ENCODE measurements at regions of chrX and their contacts with region 1.

Region 1: DNA sequence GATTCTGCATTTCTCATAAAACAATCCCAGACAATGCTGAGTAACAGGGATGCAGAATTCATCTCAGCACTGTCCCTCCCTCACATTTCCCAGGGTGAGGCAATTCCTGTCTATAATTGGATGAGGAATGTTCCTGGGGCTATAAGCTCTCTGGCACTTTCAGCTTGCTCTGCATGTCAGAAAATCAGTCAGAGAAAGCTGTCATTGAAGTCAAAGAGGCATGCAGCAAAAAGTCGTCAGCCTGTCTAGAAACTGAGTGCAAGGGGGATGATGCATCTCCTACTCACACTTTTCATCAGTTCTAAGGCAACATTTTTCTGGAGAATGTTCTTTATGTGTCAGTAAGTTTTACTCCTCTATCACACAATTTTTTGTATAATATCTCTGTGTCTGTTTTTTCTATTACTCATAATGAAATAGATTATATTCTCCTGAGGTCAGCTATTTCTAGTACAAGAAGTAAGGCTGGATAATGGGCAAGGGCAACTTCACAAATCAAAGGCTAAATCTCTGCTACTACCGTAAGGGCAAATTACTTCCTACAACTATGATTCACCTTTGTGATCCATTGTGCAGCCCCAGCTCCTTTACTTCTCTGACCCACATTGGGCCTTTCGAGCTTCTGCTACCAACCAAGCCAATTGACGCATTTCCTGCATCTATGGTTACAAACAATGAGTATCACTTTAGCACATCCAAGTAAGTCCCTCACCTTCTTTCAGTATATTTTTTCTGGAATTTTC is 56.0 kb downstream of the TASL start:
- DNase-seq: no peak
- ATAC-seq: no peak
- H3K4me3 ChIP-seq: no peak overlapping the region
- H3K4me3 Mint-ChIP-seq: no peak overlapping the region
- H3K27ac ChIP-seq: no peak overlapping the region
- H3K27ac Mint-ChIP-seq: no peak overlapping the region
- H3K4me1 ChIP-seq: no peaks in the 10 kb centered on the region
- H3K4me1 Mint-ChIP-seq: no peaks in the 10 kb centered on the region
- H3K27me3 ChIP-seq: no peaks in the 10 kb centered on the region
- H3K27me3 Mint-ChIP-seq: peaks cover 0 to 5% of the 10 kb centered on the region in 2 donors

Region 2: DNA sequence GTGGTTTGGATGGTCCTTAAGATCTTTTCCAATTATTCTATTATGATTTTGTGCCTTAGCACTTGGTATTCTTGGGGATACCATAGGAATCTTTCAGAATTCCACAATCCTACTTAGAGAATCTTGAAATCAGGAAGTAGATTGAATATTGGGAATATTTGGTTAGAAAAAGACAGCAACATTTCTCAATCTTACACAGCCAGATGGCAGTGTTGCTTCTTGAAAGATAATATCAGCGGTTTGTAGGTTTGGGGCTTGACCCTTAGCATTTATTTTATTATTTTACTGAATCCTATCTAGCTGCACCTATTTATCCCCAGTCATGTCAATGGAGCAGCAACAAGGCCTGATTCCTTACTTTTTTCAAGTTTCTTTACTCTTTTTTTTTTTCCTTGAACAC is 246.1 kb before region 1 on chrX:
- CTCF ChIA-PET with region 1: no interaction called
- POLR2A ChIA-PET with region 1: no interaction called
- DNase-seq: no peak
- ATAC-seq: no peak
- H3K4me3 ChIP-seq: no peak overlapping the region
- H3K4me3 Mint-ChIP-seq: no peak overlapping the region
- H3K27ac ChIP-seq: no peak overlapping the region
- H3K27ac Mint-ChIP-seq: no peak overlapping the region
- H3K4me1 ChIP-seq: peaks cover 0 to 9% of the 10 kb centered on the region in 2 experiments
- H3K4me1 Mint-ChIP-seq: peaks cover 5 to 8% (median 8%) of the 10 kb centered on the region in 3 donors
- H3K27me3 ChIP-seq: no peaks in the 10 kb centered on the region
- H3K27me3 Mint-ChIP-seq: peaks cover 0 to 15% of the 10 kb centered on the region in 2 donors

Region 3: GRCh38 chrX:30504309-30504708 is 17.3 kb before region 1 on chrX:
- CTCF ChIA-PET with region 1: interaction called in 1 of 2 experiments, 10 read pairs
- POLR2A ChIA-PET with region 1: no interaction called
- DNase-seq: peak in 1 of 35 experiments; percentile 27
- ATAC-seq: no peak
- H3K4me3 ChIP-seq: no peak overlapping the region
- H3K4me3 Mint-ChIP-seq: no peak overlapping the region
- H3K27ac ChIP-seq: no peak overlapping the region
- H3K27ac Mint-ChIP-seq: no peak overlapping the region
- H3K4me1 ChIP-seq: no peaks in the 10 kb centered on the region
- H3K4me1 Mint-ChIP-seq: no peaks in the 10 kb centered on the region
- H3K27me3 ChIP-seq: peaks cover 0 to 2% of the 10 kb centered on the region in 2 experiments
- H3K27me3 Mint-ChIP-seq: peaks cover 6 to 13% of the 10 kb centered on the region in 2 donors

Region 4: DNA sequence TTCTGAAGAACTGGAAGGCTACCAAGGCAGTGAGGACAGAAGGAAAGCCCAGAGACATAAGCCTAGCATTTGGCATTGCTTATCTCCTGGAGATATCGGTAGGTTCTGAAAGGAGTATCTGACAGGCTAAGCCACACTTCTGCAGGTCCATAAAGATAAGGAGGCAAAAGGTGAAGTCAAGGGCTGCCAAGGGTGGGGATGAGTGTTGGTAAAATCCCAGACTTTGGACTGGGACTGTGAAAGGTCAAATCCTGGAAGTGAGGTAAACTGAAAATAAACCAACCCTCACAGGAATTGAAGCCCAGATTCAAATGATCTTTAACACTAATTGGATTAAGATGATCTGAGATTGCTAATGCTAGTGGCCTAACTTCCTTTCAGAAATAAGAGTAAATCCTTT is 159.0 kb after region 1 on chrX:
- CTCF ChIA-PET with region 1: no interaction called
- POLR2A ChIA-PET with region 1: no interaction called
- DNase-seq: no peak
- ATAC-seq: no peak
- H3K4me3 ChIP-seq: no peak overlapping the region
- H3K4me3 Mint-ChIP-seq: no peak overlapping the region
- H3K27ac ChIP-seq: no peak overlapping the region
- H3K27ac Mint-ChIP-seq: no peak overlapping the region
- H3K4me1 ChIP-seq: no peaks in the 10 kb centered on the region
- H3K4me1 Mint-ChIP-seq: no peaks in the 10 kb centered on the region
- H3K27me3 ChIP-seq: no peaks in the 10 kb centered on the region
- H3K27me3 Mint-ChIP-seq: no peaks in the 10 kb centered on the region

Measured in T-cell (primary cell).